Lower leg skin (tissue), 4 donors: ENCODE measurements at regions of chr15 and their contacts with region 1.

Region 1: DNA sequence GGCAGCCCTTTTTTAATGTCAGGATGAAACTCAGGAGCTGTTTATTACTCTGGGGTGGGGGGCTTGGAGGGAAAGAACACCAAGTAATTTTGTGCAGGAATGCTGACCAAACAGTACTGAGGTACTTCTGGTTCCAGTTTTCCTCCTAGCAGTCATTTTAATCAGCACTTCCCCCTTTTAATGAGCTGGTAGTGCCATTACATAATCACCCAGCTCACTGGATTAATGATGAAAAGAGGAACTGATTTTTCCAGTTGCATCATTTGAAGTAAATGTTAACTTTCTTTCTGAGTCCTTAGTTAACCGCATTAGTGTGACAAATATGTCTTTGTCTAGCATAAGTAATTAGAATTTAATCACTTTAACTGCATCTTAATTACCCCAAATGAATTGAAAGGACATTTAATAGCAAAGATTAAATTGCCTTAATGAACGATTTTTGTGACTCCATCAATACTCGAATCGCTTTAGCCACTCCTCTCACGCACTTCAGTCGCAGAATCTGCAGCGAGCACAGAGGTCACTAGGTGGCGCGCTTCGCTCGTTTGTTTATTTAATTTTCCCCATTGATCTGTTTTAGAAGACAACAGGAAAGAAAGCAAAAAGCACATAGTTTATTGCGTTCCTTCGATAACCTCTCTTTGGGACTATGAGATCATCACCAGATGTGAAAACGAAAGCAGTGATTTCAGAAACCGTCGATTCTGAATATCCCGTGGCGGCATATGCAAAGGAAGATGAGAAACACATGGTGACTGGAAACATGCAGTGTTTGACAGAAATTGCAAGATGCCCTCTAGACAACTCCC is 9.8 kb downstream of the ONECUT1 start:
- DNase-seq: peak in 1 of 2 donors; percentile 53
- H3K4me3 ChIP-seq: no peak overlapping the region
- CTCF ChIP-seq: no peak
- POLR2A ChIP-seq: no peak

Region 2: GRCh38 chr15:51861557-51862359 is 918.6 kb before region 1 on chr15:
- intact Hi-C with region 1: no loop called
- DNase-seq: no peak
- H3K4me3 ChIP-seq: no peak overlapping the region
- CTCF ChIP-seq: no peak
- POLR2A ChIP-seq: no peak

Region 3: GRCh38 chr15:52870015-52870414 is 89.6 kb after region 1 on chr15:
- intact Hi-C with region 1: loop called (anchors 5 kb)
- DNase-seq: no peak
- H3K4me3 ChIP-seq: no peak overlapping the region
- CTCF ChIP-seq: no peak
- POLR2A ChIP-seq: no peak

Region 4: DNA sequence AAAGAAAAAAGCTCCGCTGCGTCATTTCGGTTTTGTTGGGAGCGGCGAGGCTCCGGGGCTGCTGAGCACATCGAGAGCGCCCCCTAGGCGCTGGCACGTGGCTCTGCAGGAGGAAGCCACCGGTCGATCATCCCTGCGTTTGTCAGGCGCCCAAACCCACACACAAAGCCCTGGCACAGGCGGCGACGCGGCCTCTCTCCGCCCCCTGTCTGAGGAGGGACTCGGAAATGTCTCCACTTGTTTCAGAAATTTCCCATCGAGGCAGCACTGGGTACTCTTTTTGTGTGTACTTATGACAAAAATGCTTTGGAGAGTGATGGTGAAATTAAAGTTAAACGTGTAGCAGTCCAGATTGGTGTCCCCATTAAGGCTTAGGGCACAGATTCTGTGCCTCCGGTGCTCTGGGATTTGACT is 417.1 kb after region 1 on chr15:
- intact Hi-C with region 1: loop called (anchors 10 kb)
- DNase-seq: peak; percentile 23 to 87
- H3K4me3 ChIP-seq: no peak overlapping the region
- CTCF ChIP-seq: no peak
- POLR2A ChIP-seq: no peak

Region 5: GRCh38 chr15:54082836-54083492 is 1302.6 kb after region 1 on chr15:
- intact Hi-C with region 1: no loop called
- DNase-seq: no peak
- H3K4me3 ChIP-seq: no peak overlapping the region
- CTCF ChIP-seq: no peak
- POLR2A ChIP-seq: no peak